ENCODE measurements at regions of chr18 and their contacts with region 1.

Region 1: GRCh38 chr18:23918401-23919032 is 96.0 kb upstream of the TTC39C start:
- DNase-seq: peak; percentile 66 to 88 (median 83)
- ATAC-seq: peak; percentile 87
- H3K4me3 ChIP-seq: no peak overlapping the region
- H3K4me3 Mint-ChIP-seq: no peak overlapping the region
- H3K27ac ChIP-seq: no peak overlapping the region
- H3K27ac Mint-ChIP-seq: no peak overlapping the region
- H3K4me1 ChIP-seq: no peaks in the 10 kb centered on the region
- H3K4me1 Mint-ChIP-seq: peaks cover 9% of the 10 kb centered on the region
- H3K27me3 ChIP-seq: no peaks in the 10 kb centered on the region
- H3K27me3 Mint-ChIP-seq: no peaks in the 10 kb centered on the region
- CTCF ChIP-seq: peak; percentile 97

Region 2: DNA sequence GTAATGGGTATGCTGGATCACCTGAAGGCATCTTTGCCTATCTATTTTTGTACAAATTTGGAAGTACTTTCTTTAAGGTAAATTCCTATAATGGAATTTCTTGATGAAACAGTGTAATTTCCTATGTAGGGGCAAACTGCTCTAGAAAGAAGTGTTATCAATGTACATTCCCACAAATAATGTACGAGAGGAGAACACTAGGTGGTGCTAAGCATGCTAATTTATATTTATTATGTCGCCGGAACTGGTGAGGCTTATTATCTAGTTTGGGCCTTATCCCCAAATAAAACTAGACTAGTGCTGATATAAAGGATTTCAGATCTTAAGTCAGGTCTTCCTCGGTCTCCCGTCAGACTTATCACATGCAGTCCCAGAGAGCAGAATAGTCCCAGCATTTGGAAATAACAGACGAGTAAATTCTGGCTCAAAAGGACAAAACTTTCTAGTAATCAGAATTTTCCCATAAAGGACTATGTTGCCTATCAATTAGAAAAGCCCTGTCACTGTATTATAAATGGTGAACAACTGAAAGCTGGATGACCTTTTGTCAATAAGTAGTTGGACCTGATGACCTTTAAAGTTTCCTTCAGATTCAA is 1072.3 kb before region 1 on chr18:
- CTCF ChIA-PET with region 1: no interaction called
- POLR2A ChIA-PET with region 1: no interaction called
- intact Hi-C with region 1: no loop called
- DNase-seq: peak in 1 of 9 experiments; percentile 4
- ATAC-seq: no peak
- H3K4me3 ChIP-seq: no peak overlapping the region
- H3K4me3 Mint-ChIP-seq: no peak overlapping the region
- H3K27ac ChIP-seq: no peak overlapping the region
- H3K27ac Mint-ChIP-seq: no peak overlapping the region
- H3K4me1 ChIP-seq: no peaks in the 10 kb centered on the region
- H3K4me1 Mint-ChIP-seq: no peaks in the 10 kb centered on the region
- H3K27me3 ChIP-seq: peaks cover 0 to 3% of the 10 kb centered on the region in 2 experiments
- H3K27me3 Mint-ChIP-seq: peaks cover 3% of the 10 kb centered on the region
- CTCF ChIP-seq: no peak

Region 3: GRCh38 chr18:23183411-23184155 is 734.9 kb before region 1 on chr18:
- CTCF ChIA-PET with region 1: no interaction called
- POLR2A ChIA-PET with region 1: no interaction called
- intact Hi-C with region 1: no loop called
- DNase-seq: no peak
- ATAC-seq: no peak
- H3K4me3 ChIP-seq: no peak overlapping the region
- H3K4me3 Mint-ChIP-seq: no peak overlapping the region
- H3K27ac ChIP-seq: no peak overlapping the region
- H3K27ac Mint-ChIP-seq: no peak overlapping the region
- H3K4me1 ChIP-seq: no peaks in the 10 kb centered on the region
- H3K4me1 Mint-ChIP-seq: peaks cover 6% of the 10 kb centered on the region
- H3K27me3 ChIP-seq: no peaks in the 10 kb centered on the region
- H3K27me3 Mint-ChIP-seq: no peaks in the 10 kb centered on the region
- CTCF ChIP-seq: no peak

Region 4: GRCh38 chr18:23503038-23503962 is 415.2 kb before region 1 on chr18 and contains the start of gene RMC1:
- CTCF ChIA-PET with region 1: interaction called, 5 read pairs
- POLR2A ChIA-PET with region 1: no interaction called
- intact Hi-C with region 1: loop called in 1 of 2 experiments (anchors 1 kb)
- DNase-seq: peak; percentile 94 to 99 (median 98)
- ATAC-seq: peak; percentile 91
- H3K4me3 ChIP-seq: peak within 1 kb of the TSS; percentile 73 to 91
- H3K4me3 Mint-ChIP-seq: peak within 1 kb of the TSS; percentile 93
- H3K27ac ChIP-seq: peak within 1 kb of the TSS; percentile 83 to 88
- H3K27ac Mint-ChIP-seq: peak within 1 kb of the TSS; percentile 92
- H3K4me1 ChIP-seq: peaks cover 35% of the 10 kb centered on the region
- H3K4me1 Mint-ChIP-seq: peaks cover 49% of the 10 kb centered on the region
- H3K27me3 ChIP-seq: no peaks in the 10 kb centered on the region
- H3K27me3 Mint-ChIP-seq: no peaks in the 10 kb centered on the region
- CTCF ChIP-seq: no peak
- total RNA-seq, gene RMC1: 59.8 to 62.2 TPM

Region 5: GRCh38 chr18:23812546-23813440 is 105.7 kb before region 1 on chr18:
- CTCF ChIA-PET with region 1: interaction called, 15 read pairs
- POLR2A ChIA-PET with region 1: no interaction called
- intact Hi-C with region 1: loop called in 1 of 2 experiments (anchors 1 kb)
- DNase-seq: peak in 2 of 9 experiments; percentile 45 to 59
- ATAC-seq: no peak
- H3K4me3 ChIP-seq: no peak overlapping the region
- H3K4me3 Mint-ChIP-seq: no peak overlapping the region
- H3K27ac ChIP-seq: no peak overlapping the region
- H3K27ac Mint-ChIP-seq: no peak overlapping the region
- H3K4me1 ChIP-seq: peaks cover 19% of the 10 kb centered on the region
- H3K4me1 Mint-ChIP-seq: peaks cover 30% of the 10 kb centered on the region
- H3K27me3 ChIP-seq: no peaks in the 10 kb centered on the region
- H3K27me3 Mint-ChIP-seq: no peaks in the 10 kb centered on the region
- CTCF ChIP-seq: peak; percentile 67

Region 6: DNA sequence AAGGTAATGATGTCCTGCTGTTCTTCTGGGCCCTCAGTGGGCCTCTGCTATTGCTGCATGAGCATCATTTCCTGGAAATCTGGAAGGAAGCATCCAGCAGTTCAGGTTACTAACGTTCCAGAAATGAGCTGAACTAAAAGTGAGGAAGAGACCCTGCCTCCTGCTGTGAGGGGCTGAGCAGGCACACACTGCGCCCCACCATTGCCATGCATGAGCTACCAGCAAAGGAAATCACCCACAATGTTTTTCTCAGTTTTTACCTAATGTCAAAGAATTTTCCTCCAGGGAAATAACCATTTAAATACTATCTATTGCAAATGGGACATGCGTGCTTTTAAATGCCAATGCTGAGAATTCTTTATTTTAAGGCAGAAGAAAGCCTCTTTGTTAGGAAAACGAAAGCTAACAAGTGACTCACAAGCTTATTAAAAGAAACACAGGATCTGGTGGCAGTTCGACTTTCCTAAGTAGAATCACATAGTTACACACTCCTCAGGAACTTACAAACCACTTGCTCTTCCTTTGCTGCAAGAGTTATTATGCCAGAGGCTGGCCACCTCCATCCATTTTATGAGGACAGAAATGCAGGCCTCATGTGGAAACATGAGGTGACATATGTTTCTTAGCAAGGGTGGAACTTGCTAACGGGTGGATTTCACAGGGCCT is 56.6 kb before region 1 on chr18:
- CTCF ChIA-PET with region 1: interaction called, 10 read pairs
- POLR2A ChIA-PET with region 1: no interaction called
- intact Hi-C with region 1: loop called in 1 of 2 experiments (anchors 5 kb)
- DNase-seq: peak in 1 of 9 experiments; percentile 23
- ATAC-seq: no peak
- H3K4me3 ChIP-seq: no peak overlapping the region
- H3K4me3 Mint-ChIP-seq: no peak overlapping the region
- H3K27ac ChIP-seq: peak overlapping the region in 1 of 2 experiments; percentile 26
- H3K27ac Mint-ChIP-seq: peak overlapping the region; percentile 69
- H3K4me1 ChIP-seq: peaks cover 34% of the 10 kb centered on the region
- H3K4me1 Mint-ChIP-seq: peaks cover 46% of the 10 kb centered on the region
- H3K27me3 ChIP-seq: no peaks in the 10 kb centered on the region
- H3K27me3 Mint-ChIP-seq: no peaks in the 10 kb centered on the region
- CTCF ChIP-seq: no peak

Region 7: GRCh38 chr18:23938043-23938756 is 19.7 kb after region 1 on chr18:
- CTCF ChIA-PET with region 1: interaction called, 14 read pairs
- POLR2A ChIA-PET with region 1: no interaction called
- intact Hi-C with region 1: no loop called
- DNase-seq: peak in 6 of 9 experiments; percentile 17 to 55 (median 27)
- ATAC-seq: peak; percentile 45
- H3K4me3 ChIP-seq: no peak overlapping the region
- H3K4me3 Mint-ChIP-seq: no peak overlapping the region
- H3K27ac ChIP-seq: no peak overlapping the region
- H3K27ac Mint-ChIP-seq: no peak overlapping the region
- H3K4me1 ChIP-seq: peaks cover 31% of the 10 kb centered on the region
- H3K4me1 Mint-ChIP-seq: peaks cover 62% of the 10 kb centered on the region
- H3K27me3 ChIP-seq: no peaks in the 10 kb centered on the region
- H3K27me3 Mint-ChIP-seq: no peaks in the 10 kb centered on the region
- CTCF ChIP-seq: no peak

Region 8: GRCh38 chr18:24112874-24113615 is 194.5 kb after region 1 on chr18:
- CTCF ChIA-PET with region 1: interaction called, 20 read pairs
- POLR2A ChIA-PET with region 1: no interaction called
- intact Hi-C with region 1: loop called in 1 of 2 experiments (anchors 2 kb)
- DNase-seq: no peak
- ATAC-seq: no peak
- H3K4me3 ChIP-seq: no peak overlapping the region
- H3K4me3 Mint-ChIP-seq: no peak overlapping the region
- H3K27ac ChIP-seq: no peak overlapping the region
- H3K27ac Mint-ChIP-seq: peak overlapping the region; percentile 42
- H3K4me1 ChIP-seq: peaks cover 10% of the 10 kb centered on the region
- H3K4me1 Mint-ChIP-seq: peaks cover 27% of the 10 kb centered on the region
- H3K27me3 ChIP-seq: no peaks in the 10 kb centered on the region
- H3K27me3 Mint-ChIP-seq: no peaks in the 10 kb centered on the region
- CTCF ChIP-seq: no peak